Heart left ventricle (tissue), 16 donors: ENCODE measurements at regions of chr9 and their contacts with region 1.

Region 1: GRCh38 chr9:94178927-94179326 is 80.2 kb upstream of the ZNF169 start:
- DNase-seq: no peak
- ATAC-seq: no peak
- H3K4me3 ChIP-seq: no peak overlapping the region
- H3K27ac ChIP-seq: peak overlapping the region in 1 of 12 donors; percentile 3
- H3K4me1 ChIP-seq: peaks cover 22 to 85% (median 65%) of the 10 kb centered on the region in 12 donors
- H3K27me3 ChIP-seq: no peaks in the 10 kb centered on the region
- CTCF ChIP-seq: no peak
- POLR2A ChIP-seq: no peak

Region 2: GRCh38 chr9:94065535-94065961 is 113.4 kb before region 1 on chr9:
- intact Hi-C with region 1: loop called in 1 of 10 experiments (anchors 10 kb)
- DNase-seq: peak in 4 of 5 donors; percentile 70 to 79 (median 72)
- ATAC-seq: peak; percentile 64 to 84 (median 76)
- H3K4me3 ChIP-seq: no peak overlapping the region
- H3K27ac ChIP-seq: peak overlapping the region in 3 of 12 donors; percentile 8 to 44 (median 31)
- H3K4me1 ChIP-seq: peaks cover 0 to 8% (median 2%) of the 10 kb centered on the region in 12 donors
- H3K27me3 ChIP-seq: no peaks in the 10 kb centered on the region
- CTCF ChIP-seq: peak; percentile 80 to 95 (median 88)
- POLR2A ChIP-seq: no peak

Region 3: DNA sequence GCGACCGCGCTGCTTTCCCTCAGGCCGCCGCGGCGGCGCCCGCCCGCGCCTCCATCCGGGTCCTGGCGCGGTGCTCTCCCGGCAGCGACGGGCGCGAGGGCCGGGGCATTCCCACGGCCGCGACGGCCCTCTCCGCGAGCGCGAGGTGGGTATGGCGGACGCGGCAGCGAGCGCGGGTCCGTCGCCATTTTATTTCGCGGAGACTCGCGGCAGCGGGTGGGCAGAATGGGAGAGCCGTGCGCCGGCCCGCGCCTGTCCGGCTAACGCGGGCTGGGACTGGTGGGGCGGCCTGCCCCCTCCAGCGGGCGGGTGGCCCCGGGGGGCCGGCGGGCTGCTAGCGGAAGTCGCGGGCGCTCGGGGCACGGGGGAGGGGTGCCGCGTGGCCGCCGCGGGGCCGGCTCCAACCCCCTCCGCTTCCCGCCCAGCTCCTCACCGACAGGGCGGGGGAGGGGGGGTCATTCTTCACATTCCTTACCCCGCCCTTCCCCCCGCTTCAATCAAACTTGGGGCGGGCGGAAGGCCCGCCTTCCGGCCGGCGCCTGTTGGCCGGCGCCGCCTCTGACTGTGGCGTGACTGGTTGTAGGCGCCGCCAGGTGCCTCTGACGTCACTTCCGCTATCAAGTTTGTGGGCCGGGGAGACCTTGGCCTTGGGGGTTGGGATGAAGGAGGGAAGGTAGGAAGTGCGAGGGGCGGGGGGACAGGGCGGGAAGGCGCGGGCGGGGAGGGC is 12.5 kb before region 1 on chr9:
- intact Hi-C with region 1: loop called in 1 of 10 experiments (anchors 1 kb)
- DNase-seq: peak; percentile 98 to 99 (median 99)
- ATAC-seq: peak; percentile 83 to 88 (median 84)
- H3K4me3 ChIP-seq: peak overlapping the region; percentile 50 to 91 (median 86)
- H3K27ac ChIP-seq: peak overlapping the region; percentile 97 to 100 (median 100)
- H3K4me1 ChIP-seq: peaks cover 3 to 47% (median 38%) of the 10 kb centered on the region in 12 donors
- H3K27me3 ChIP-seq: no peaks in the 10 kb centered on the region
- CTCF ChIP-seq: peak in 5 of 12 donors; percentile 22 to 51 (median 29)
- POLR2A ChIP-seq: peak; percentile 83 to 97

Region 4: DNA sequence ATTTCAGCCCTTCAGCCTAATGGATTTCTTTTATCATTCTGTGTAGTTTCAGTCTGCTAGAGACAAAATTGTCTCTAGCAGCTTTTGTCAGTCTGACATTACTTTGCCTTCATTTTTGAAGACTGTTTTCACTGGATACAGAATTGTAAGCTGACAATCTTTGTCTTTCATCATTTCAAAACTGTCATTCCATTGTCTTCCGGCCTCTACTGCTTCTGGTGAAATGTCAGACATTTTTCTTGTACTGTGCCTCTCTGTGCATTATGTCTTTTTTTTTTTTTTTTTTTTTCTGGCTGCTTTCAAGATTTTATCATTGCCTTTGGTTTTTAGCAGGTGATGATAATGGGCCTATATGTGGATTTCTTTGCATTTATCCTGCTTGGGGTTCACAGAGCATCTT is 28.9 kb after region 1 on chr9:
- intact Hi-C with region 1: loop called in 2 of 10 experiments (anchors 1 to 5 kb)
- DNase-seq: no peak
- ATAC-seq: no peak
- H3K4me3 ChIP-seq: no peak overlapping the region
- H3K27ac ChIP-seq: no peak overlapping the region
- H3K4me1 ChIP-seq: no peaks in the 10 kb centered on the region
- H3K27me3 ChIP-seq: no peaks in the 10 kb centered on the region
- CTCF ChIP-seq: no peak
- POLR2A ChIP-seq: no peak

Region 5: GRCh38 chr9:94259077-94259892 is 80.4 kb after region 1 on chr9 and contains the start of gene ZNF169:
- intact Hi-C with region 1: no loop called
- DNase-seq: peak; percentile 90 to 95 (median 93)
- ATAC-seq: peak; percentile 99 to 100 (median 100)
- H3K4me3 ChIP-seq: peak within 1 kb of the TSS; percentile 51 to 97 (median 84)
- H3K27ac ChIP-seq: peak within 1 kb of the TSS in 11 of 12 donors; percentile 24 to 75 (median 64)
- H3K4me1 ChIP-seq: peaks cover 0 to 15% (median 8%) of the 10 kb centered on the region in 12 donors
- H3K27me3 ChIP-seq: peaks cover 0 to 3% (median 0%) of the 10 kb centered on the region in 9 donors
- CTCF ChIP-seq: no peak
- POLR2A ChIP-seq: peak in 1 of 2 donors; percentile 62
- total RNA-seq, gene ZNF169: 0.99 to 8.7 (median 2.1) TPM